Activated naive CD4-positive, alpha-beta T cell treated with anti-CD3 and anti-CD28 coated beads for 36 hours (primary cell): ENCODE measurements at regions of chr5 and their contacts with region 1.

Region 1: DNA sequence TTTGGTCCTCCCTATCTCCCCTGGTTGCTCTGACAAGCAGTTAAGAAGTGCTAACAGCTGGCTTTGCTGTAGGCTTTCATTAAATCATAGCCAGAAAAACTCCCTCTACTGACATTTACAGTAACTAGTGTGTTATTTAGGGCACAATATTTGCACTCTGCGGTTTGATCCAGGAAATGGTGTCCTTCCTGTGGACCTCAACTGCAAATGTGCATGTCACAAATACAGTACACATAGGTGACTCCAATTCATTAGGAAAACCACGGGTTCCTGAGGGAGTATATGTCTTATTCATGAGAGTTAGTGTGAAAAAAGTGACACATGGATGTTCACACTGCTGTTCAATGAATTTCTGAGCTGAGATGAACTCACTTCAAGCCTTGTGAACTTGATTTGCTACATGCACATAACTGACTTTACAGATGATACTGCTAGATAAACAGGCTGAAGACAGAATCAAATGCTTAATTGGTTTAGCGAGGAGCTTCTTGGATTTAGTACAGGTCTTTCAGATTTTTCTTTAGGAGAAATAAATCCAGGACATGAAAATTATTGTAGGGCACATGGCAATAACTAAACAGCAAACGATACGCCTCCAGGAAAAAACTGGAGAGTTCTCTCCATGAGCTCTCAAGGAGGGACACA is 281.5 kb downstream of the EFNA5 start:
- DNase-seq: peak; percentile 19
- H3K4me3 Mint-ChIP-seq: no peak overlapping the region
- H3K27ac Mint-ChIP-seq: no peak overlapping the region
- H3K4me1 Mint-ChIP-seq: peaks cover 18% of the 10 kb centered on the region
- H3K27me3 Mint-ChIP-seq: no peaks in the 10 kb centered on the region

Region 2: DNA sequence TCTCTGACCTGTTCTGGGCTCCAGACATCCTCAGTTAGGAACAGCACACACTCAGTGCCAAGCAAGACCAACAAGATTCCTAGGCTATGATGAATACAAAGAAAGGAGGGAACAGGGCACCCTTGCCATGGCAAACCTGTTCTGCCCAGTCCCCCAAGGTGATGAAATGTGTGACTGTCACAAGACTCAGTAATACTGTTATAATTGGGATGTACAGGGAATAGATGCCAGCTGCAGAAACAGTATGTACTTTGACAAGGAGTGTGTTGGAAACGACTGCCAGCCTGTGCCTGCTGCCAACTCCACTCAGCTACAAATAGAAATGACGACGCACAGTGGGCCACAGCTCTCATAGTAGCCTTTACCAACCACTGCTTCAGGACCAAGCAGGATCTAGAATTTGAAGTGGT is 171.5 kb before region 1 on chr5:
- CTCF ChIA-PET with region 1: no interaction called
- intact Hi-C with region 1: no loop called
- DNase-seq: no peak
- H3K4me3 Mint-ChIP-seq: no peak overlapping the region
- H3K27ac Mint-ChIP-seq: no peak overlapping the region
- H3K4me1 Mint-ChIP-seq: no peaks in the 10 kb centered on the region
- H3K27me3 Mint-ChIP-seq: no peaks in the 10 kb centered on the region

Region 3: GRCh38 chr5:107289030-107289714 is 100.1 kb before region 1 on chr5:
- CTCF ChIA-PET with region 1: no interaction called
- intact Hi-C with region 1: loop called (anchors 2 kb)
- DNase-seq: peak; percentile 5
- H3K4me3 Mint-ChIP-seq: no peak overlapping the region
- H3K27ac Mint-ChIP-seq: no peak overlapping the region
- H3K4me1 Mint-ChIP-seq: peaks cover 7% of the 10 kb centered on the region
- H3K27me3 Mint-ChIP-seq: peaks cover 3% of the 10 kb centered on the region

Region 4: DNA sequence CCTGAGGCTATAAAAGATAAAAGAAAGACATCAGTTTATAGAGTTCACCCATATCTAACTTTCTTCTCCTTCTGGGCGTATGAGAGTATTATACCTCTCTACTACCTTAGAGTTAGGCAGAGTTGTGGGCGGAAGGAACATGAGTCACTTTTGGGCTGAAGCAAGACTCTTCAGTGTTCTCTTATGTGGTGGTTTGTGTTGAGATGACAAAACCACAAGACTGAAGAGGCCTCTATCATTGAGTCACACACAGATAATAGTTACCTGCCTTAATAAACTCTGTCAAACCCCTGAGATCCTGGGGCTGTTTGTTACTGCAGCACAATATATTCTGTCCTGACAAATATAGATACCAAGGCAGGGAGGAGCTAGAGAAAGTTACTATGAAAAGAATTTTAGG is 97.2 kb after region 1 on chr5:
- CTCF ChIA-PET with region 1: no interaction called
- intact Hi-C with region 1: loop called (anchors 5 kb)
- DNase-seq: peak; percentile 60
- H3K4me3 Mint-ChIP-seq: no peak overlapping the region
- H3K27ac Mint-ChIP-seq: no peak overlapping the region
- H3K4me1 Mint-ChIP-seq: peaks cover 15% of the 10 kb centered on the region
- H3K27me3 Mint-ChIP-seq: peaks cover 6% of the 10 kb centered on the region